ENCODE measurements at regions of chr13 and their contacts with region 1.

Region 1: DNA sequence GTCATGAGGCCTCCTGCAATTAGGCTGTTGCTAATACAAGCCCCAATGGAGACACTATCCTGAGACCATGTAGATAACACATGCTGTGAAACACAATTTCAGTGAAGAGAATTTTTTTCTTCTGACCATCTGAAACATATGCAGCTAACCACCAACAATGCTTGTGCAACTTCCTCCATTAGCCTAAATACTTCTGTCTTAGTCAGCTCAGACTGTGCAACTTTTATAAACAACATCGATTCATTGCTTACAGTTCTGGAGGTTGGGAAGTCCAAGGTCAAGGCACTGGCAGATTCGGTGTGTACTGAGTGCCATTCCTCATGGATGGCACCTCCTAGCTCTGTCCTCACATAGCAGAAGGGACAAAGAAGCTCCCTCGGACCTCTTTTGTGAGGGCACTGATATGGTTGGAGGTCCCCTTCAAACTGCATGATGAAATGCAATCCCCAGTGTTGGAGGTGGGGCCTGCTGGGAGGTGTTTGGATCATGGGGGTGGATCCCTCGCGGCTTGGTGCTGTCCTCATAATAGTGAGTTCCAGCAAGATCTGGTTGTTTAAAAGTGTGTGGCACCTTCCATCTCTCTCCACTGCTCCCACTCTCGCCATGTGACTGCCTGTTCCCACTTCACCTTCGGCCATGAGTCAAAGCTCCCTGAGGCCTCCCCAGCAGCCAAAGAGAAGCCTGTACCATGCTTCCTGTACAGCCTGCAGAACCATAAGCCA is 27.7 kb downstream of the STK24 start:
- DNase-seq: no peak
- ATAC-seq: peak; percentile 44
- H3K4me3 ChIP-seq: no peak overlapping the region
- H3K27ac ChIP-seq: no peak overlapping the region; the same call in none of the 2 replicates
- H3K4me1 ChIP-seq: peaks cover 29% of the 10 kb centered on the region
- H3K27me3 ChIP-seq: no peaks in the 10 kb centered on the region
- CTCF ChIP-seq: no peak
- EP300 ChIP-seq: no peak
- POLR2A ChIP-seq: no peak
- RAD21 ChIP-seq: no peak

Region 2: GRCh38 chr13:98484289-98485219 is 64.6 kb before region 1 on chr13:
- CTCF ChIA-PET with region 1: no interaction called
- POLR2A ChIA-PET with region 1: no interaction called
- RAD21 ChIA-PET with region 1: no interaction called
- SMC1A ChIA-PET with region 1: interaction called, 10 read pairs
- in situ Hi-C with region 1: no loop called
- intact Hi-C with region 1: no loop called
- DNase-seq: no peak
- ATAC-seq: peak; percentile 70
- H3K4me3 ChIP-seq: no peak overlapping the region
- H3K27ac ChIP-seq: peak overlapping the region; percentile 79
- H3K4me1 ChIP-seq: peaks cover 81% of the 10 kb centered on the region
- H3K27me3 ChIP-seq: no peaks in the 10 kb centered on the region
- CTCF ChIP-seq: no peak
- EP300 ChIP-seq: no peak
- POLR2A ChIP-seq: no peak
- RAD21 ChIP-seq: no peak

Measured in GM12878 (cell line).